ENCODE measurements at regions of chr21 and their contacts with region 1.

Region 1: DNA sequence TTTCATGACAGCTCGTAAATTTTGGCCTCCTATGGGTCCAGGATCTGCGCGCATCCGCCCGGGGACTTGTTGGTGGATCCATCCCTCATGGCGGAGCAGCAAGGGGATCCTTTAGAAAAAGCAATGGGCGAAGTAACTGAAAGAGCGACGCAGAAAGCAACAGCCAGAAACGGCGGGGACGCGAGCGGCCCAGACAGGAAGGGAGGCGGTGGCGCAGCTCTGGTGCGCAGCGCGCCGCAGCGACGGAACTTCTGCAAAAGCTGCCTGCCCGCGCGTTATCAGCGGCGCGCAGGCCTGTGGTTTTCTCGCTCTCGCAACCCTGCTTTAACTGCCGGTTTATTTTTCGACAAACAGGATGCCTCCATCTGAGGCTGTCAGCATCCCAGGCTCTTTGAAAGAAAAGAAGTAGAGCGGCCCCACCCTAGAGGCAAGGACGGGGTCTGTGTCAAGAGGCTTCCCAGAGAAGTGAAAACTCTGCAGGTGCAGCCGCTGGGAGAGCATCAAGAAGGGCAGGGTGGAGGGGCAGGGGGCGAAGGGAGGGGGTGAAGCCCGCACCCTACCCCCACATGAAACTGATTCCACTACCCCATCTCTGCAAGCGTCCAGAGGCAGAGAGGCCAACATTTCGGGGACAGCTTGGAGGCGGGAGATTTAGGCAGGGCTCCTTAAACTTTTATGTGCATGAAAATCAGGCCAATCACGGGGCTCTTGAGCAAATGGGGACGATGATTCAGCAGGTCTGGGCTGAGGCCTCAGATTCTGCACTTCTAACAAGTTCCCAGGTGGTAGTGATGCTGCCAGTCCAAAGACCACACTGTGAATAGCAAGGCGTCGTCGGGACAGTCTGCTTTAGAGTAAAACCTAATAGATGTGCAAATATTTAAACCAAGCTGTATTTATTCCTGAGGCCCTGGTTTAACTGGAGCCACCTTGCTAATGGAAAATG is 22.2 kb downstream of the RUNX1 start:
- DNase-seq: peak; percentile 95
- ATAC-seq: peak; percentile 86
- H3K4me3 ChIP-seq: no peak overlapping the region
- H3K27ac ChIP-seq: peak overlapping the region; percentile 73
- H3K4me1 ChIP-seq: peaks cover 71% of the 10 kb centered on the region
- H3K27me3 ChIP-seq: no peaks in the 10 kb centered on the region
- CTCF ChIP-seq: no peak
- EP300 ChIP-seq: peak; percentile 39 to 80; a peak in 2 of 4 replicates
- POLR2A ChIP-seq: 0 out of 4 replicates have a peak, but pooled peaks of 1 of the 2 experiments have one; percentile 31
- RAD21 ChIP-seq: no peak

Region 2: GRCh38 chr21:34908419-34909055 is 118.4 kb before region 1 on chr21:
- CTCF ChIA-PET with region 1: no interaction called
- POLR2A ChIA-PET with region 1: no interaction called
- in situ Hi-C with region 1: no loop called
- intact Hi-C with region 1: loop called (anchors 2 kb)
- DNase-seq: peak; percentile 90
- ATAC-seq: peak; percentile 81
- H3K4me3 ChIP-seq: no peak overlapping the region
- H3K27ac ChIP-seq: no peak overlapping the region
- H3K4me1 ChIP-seq: peaks cover 52% of the 10 kb centered on the region
- H3K27me3 ChIP-seq: no peaks in the 10 kb centered on the region
- CTCF ChIP-seq: no peak
- EP300 ChIP-seq: peak; percentile 50 to 94; a peak in 2 of 4 replicates
- POLR2A ChIP-seq: no peak
- RAD21 ChIP-seq: no peak

Region 3: GRCh38 chr21:34952701-34953100 is 74.2 kb before region 1 on chr21:
- CTCF ChIA-PET with region 1: no interaction called
- POLR2A ChIA-PET with region 1: no interaction called
- in situ Hi-C with region 1: no loop called
- intact Hi-C with region 1: no loop called
- DNase-seq: no peak
- ATAC-seq: no peak
- H3K4me3 ChIP-seq: no peak overlapping the region
- H3K27ac ChIP-seq: no peak overlapping the region
- H3K4me1 ChIP-seq: peaks cover 11% of the 10 kb centered on the region; the same call in 1 of the 2 replicates
- H3K27me3 ChIP-seq: no peaks in the 10 kb centered on the region
- CTCF ChIP-seq: no peak
- EP300 ChIP-seq: no peak
- POLR2A ChIP-seq: no peak
- RAD21 ChIP-seq: no peak

Region 4: GRCh38 chr21:34967509-34968289 is 59.2 kb before region 1 on chr21:
- CTCF ChIA-PET with region 1: no interaction called
- POLR2A ChIA-PET with region 1: no interaction called
- in situ Hi-C with region 1: no loop called
- intact Hi-C with region 1: loop called (anchors 10 kb)
- DNase-seq: peak; percentile 42
- ATAC-seq: peak; percentile 43; the same call in 1 of the 3 replicates
- H3K4me3 ChIP-seq: no peak overlapping the region
- H3K27ac ChIP-seq: no peak overlapping the region
- H3K4me1 ChIP-seq: peaks cover 62% of the 10 kb centered on the region
- H3K27me3 ChIP-seq: no peaks in the 10 kb centered on the region
- CTCF ChIP-seq: no peak
- EP300 ChIP-seq: no peak
- POLR2A ChIP-seq: no peak
- RAD21 ChIP-seq: no peak